B cell (primary cell): ENCODE measurements at regions of chr17 and their contacts with region 1.

Region 1: DNA sequence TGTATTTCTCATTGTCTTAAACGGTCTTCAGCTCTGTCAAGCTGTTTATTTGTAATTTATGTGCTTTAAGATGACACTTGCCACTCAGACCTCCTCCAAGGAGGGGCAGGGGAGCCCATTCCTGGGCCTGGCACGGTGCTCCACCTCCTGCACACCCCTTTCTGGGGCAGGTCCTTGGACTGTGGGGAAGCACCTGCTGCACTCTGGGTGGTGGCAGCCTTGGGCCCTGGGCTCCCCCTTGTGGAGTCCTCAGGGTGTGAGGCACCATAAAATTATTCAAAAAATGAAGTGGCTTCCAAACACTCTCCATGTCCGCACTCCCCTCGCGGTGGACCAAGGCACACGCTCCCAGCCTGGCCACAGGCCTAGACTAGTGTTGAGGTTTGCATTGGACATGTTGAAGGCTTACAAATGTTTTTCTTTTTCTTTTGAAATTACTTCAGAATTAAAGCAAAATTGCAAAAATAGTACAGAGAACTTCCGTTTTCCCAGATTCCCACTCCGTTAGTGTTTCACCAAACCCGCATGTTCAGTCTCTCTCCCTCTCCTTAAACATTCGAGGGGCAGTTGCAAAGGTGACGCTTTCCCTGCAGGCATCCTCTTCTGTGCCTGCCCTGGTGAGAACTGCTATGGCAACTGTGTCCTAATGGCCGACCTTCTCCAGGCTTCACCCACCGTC is 32.4 kb downstream of the FOXK2 start:
- DNase-seq: peak; percentile 84
- ATAC-seq: peak; percentile 100
- H3K4me3 ChIP-seq: no peak overlapping the region
- H3K4me3 Mint-ChIP-seq: no peak overlapping the region
- H3K27ac ChIP-seq: no peak overlapping the region
- H3K27ac Mint-ChIP-seq: no peak overlapping the region
- H3K4me1 ChIP-seq: peaks cover 15 to 28% of the 10 kb centered on the region in 2 donors
- H3K4me1 Mint-ChIP-seq: peaks cover 40% of the 10 kb centered on the region
- H3K27me3 ChIP-seq: no peaks in the 10 kb centered on the region
- H3K27me3 Mint-ChIP-seq: no peaks in the 10 kb centered on the region
- CTCF ChIP-seq: peak; percentile 94

Region 2: GRCh38 chr17:82037113-82037888 is 514.6 kb before region 1 on chr17 and contains the start of gene DCXR:
- CTCF ChIA-PET with region 1: no interaction called
- POLR2A ChIA-PET with region 1: no interaction called
- intact Hi-C with region 1: loop called (anchors 10 kb)
- DNase-seq: peak; percentile 98
- ATAC-seq: peak; percentile 91
- H3K4me3 ChIP-seq: peak within 1 kb of the TSS; percentile 34 to 76 (median 72)
- H3K4me3 Mint-ChIP-seq: peak within 1 kb of the TSS; percentile 90
- H3K27ac ChIP-seq: peak within 1 kb of the TSS; percentile 59 to 84
- H3K27ac Mint-ChIP-seq: peak within 1 kb of the TSS; percentile 99
- H3K4me1 ChIP-seq: peaks cover 18 to 20% of the 10 kb centered on the region in 2 donors
- H3K4me1 Mint-ChIP-seq: peaks cover 24% of the 10 kb centered on the region
- H3K27me3 ChIP-seq: peaks cover 0 to 4% (median 1%) of the 10 kb centered on the region in 4 experiments
- H3K27me3 Mint-ChIP-seq: no peaks in the 10 kb centered on the region
- CTCF ChIP-seq: peak; percentile 87
- total RNA-seq, gene DCXR: 63.9 and 70.7 TPM in 2 replicates

Region 3: GRCh38 chr17:82351716-82352488 is 200.0 kb before region 1 on chr17:
- CTCF ChIA-PET with region 1: interaction called, 43 read pairs
- POLR2A ChIA-PET with region 1: no interaction called
- intact Hi-C with region 1: loop called (anchors 1 kb)
- DNase-seq: peak; percentile 89
- ATAC-seq: peak; percentile 90
- H3K4me3 ChIP-seq: no peak overlapping the region
- H3K4me3 Mint-ChIP-seq: no peak overlapping the region
- H3K27ac ChIP-seq: no peak overlapping the region
- H3K27ac Mint-ChIP-seq: no peak overlapping the region
- H3K4me1 ChIP-seq: peaks cover 10 to 14% of the 10 kb centered on the region in 2 donors
- H3K4me1 Mint-ChIP-seq: peaks cover 5% of the 10 kb centered on the region
- H3K27me3 ChIP-seq: peaks cover 0 to 27% (median 6%) of the 10 kb centered on the region in 4 experiments
- H3K27me3 Mint-ChIP-seq: peaks cover 13% of the 10 kb centered on the region
- CTCF ChIP-seq: peak; percentile 97

Region 4: GRCh38 chr17:82450170-82451106 is 101.5 kb before region 1 on chr17 and contains the start of gene CYBC1:
- CTCF ChIA-PET with region 1: interaction called, 5 read pairs
- POLR2A ChIA-PET with region 1: interaction called, 4 read pairs
- intact Hi-C with region 1: loop called (anchors 1 kb)
- DNase-seq: peak; percentile 97
- ATAC-seq: peak; percentile 55
- H3K4me3 ChIP-seq: peak within 1 kb of the TSS; percentile 81 to 99 (median 93)
- H3K4me3 Mint-ChIP-seq: peak within 1 kb of the TSS; percentile 88
- H3K27ac ChIP-seq: peak within 1 kb of the TSS; percentile 95 to 99
- H3K27ac Mint-ChIP-seq: peak within 1 kb of the TSS; percentile 96
- H3K4me1 ChIP-seq: peaks cover 17 to 47% of the 10 kb centered on the region in 2 donors
- H3K4me1 Mint-ChIP-seq: peaks cover 40% of the 10 kb centered on the region
- H3K27me3 ChIP-seq: no peaks in the 10 kb centered on the region
- H3K27me3 Mint-ChIP-seq: no peaks in the 10 kb centered on the region
- CTCF ChIP-seq: no peak
- total RNA-seq, gene CYBC1: 569 and 578 TPM in 2 replicates

Region 5: DNA sequence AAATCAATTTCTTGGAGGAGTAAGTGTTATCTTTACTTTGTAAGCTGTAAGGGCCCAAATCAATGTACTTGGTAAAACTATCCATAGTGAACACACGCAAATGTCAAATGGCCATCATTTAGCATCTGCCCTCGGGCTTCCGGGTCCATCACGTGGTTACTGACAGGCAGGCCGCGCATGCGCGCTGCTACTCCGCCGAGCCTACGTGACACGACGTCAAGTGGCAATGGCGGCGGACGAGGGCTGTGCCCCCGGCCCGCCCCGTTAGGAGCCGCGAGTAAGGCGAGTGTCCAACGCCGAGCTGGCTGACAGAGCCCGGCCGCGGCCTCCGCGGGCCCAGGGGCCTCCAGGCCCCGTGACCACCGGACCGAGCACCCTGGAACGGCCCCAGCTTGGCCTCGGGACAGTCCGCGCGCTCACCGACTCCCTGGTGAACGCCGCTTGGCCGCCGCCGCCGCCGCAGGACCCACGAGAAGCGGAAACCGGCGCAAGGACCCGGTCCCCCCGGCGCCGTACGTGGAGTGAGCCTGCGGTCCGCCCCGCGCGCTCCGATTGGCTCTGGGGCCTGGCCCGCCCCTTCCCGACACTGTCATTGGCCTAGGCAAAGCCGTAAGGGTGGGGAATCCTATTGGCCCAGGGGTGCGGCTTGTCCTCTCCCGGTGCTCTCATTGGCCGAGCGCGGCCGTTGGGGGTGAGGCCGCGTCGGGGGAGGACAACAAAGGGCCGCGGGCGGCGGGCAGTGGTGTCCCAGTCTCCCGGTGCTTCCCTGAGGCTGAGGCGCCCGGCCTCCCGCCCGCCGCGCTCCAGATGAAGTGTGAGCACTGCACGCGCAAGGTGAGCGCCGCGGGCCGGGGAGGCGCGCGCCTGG is 93.7 kb before region 1 on chr17 and contains the start of gene NARF:
- CTCF ChIA-PET with region 1: interaction called, 4 read pairs
- POLR2A ChIA-PET with region 1: no interaction called
- intact Hi-C with region 1: loop called (anchors 1 kb)
- DNase-seq: peak; percentile 97
- ATAC-seq: peak; percentile 96
- H3K4me3 ChIP-seq: peak within 1 kb of the TSS; percentile 53 to 82 (median 74)
- H3K4me3 Mint-ChIP-seq: peak within 1 kb of the TSS; percentile 81
- H3K27ac ChIP-seq: peak within 1 kb of the TSS; percentile 91 to 99
- H3K27ac Mint-ChIP-seq: peak within 1 kb of the TSS; percentile 90
- H3K4me1 ChIP-seq: peaks cover 13 to 19% of the 10 kb centered on the region in 2 donors
- H3K4me1 Mint-ChIP-seq: peaks cover 19% of the 10 kb centered on the region
- H3K27me3 ChIP-seq: no peaks in the 10 kb centered on the region
- H3K27me3 Mint-ChIP-seq: no peaks in the 10 kb centered on the region
- CTCF ChIP-seq: no peak
- total RNA-seq, gene NARF: 103 and 104 TPM in 2 replicates

Region 6: DNA sequence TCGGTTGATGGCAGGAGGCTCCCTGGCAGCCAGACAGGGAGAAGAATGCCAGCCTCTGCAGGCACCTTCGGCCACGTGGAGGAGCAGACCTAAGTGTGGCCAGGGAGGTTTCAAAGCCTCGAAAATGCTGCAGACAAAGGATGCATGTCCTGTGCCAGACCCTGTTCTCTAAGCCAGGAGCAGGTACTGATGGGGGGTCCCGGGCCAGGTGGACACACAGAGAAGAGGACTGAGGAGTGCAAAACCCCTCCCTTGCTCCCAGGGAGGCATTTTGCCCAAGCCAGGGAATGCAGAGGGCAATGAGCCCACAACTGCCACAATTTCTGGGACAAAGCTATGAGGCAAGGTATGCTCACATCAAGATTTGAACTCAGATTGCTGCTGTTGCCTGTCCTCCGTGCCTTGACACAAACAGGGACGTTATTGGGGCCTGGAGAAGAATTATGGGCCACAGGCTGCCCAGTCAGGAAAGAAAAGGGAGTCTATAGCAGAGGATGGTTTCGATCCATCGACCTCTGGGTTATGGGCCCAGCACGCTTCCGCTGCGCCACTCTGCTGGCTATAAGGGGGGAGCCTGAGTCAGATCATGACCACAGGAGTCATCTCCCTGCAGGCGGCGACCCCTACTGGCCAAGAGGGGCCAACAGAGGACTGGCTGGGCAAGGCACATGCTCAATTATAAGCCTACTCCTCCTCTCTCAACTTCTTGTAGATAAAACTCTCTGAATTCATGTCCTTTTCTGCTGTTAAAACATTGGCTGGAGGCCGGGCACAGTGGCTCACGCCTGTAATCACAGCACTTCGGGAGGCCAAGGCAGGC is 57.5 kb before region 1 on chr17:
- CTCF ChIA-PET with region 1: interaction called, 8 read pairs
- POLR2A ChIA-PET with region 1: no interaction called
- intact Hi-C with region 1: loop called (anchors 1 kb)
- DNase-seq: peak; percentile 94
- ATAC-seq: peak; percentile 73
- H3K4me3 ChIP-seq: no peak overlapping the region
- H3K4me3 Mint-ChIP-seq: peak overlapping the region; percentile 77
- H3K27ac ChIP-seq: peak overlapping the region; percentile 7 to 25
- H3K27ac Mint-ChIP-seq: peak overlapping the region; percentile 97
- H3K4me1 ChIP-seq: peaks cover 7 to 39% of the 10 kb centered on the region in 2 donors
- H3K4me1 Mint-ChIP-seq: peaks cover 28% of the 10 kb centered on the region
- H3K27me3 ChIP-seq: no peaks in the 10 kb centered on the region
- H3K27me3 Mint-ChIP-seq: no peaks in the 10 kb centered on the region
- CTCF ChIP-seq: peak; percentile 83

Region 7: GRCh38 chr17:82518826-82519810 is 32.8 kb before region 1 on chr17 and contains the start of gene FOXK2:
- CTCF ChIA-PET with region 1: interaction called, 6 read pairs
- POLR2A ChIA-PET with region 1: no interaction called
- intact Hi-C with region 1: loop called (anchors 2 kb)
- DNase-seq: peak; percentile 96
- ATAC-seq: peak; percentile 97
- H3K4me3 ChIP-seq: peak within 1 kb of the TSS; percentile 50 to 71 (median 64)
- H3K4me3 Mint-ChIP-seq: peak within 1 kb of the TSS; percentile 88
- H3K27ac ChIP-seq: peak within 1 kb of the TSS; percentile 72 to 82
- H3K27ac Mint-ChIP-seq: peak within 1 kb of the TSS; percentile 87
- H3K4me1 ChIP-seq: peaks cover 8 to 23% of the 10 kb centered on the region in 2 donors
- H3K4me1 Mint-ChIP-seq: peaks cover 20% of the 10 kb centered on the region
- H3K27me3 ChIP-seq: no peaks in the 10 kb centered on the region
- H3K27me3 Mint-ChIP-seq: no peaks in the 10 kb centered on the region
- CTCF ChIP-seq: no peak
- total RNA-seq, gene FOXK2: 62.7 and 64.3 TPM in 2 replicates

Region 8: DNA sequence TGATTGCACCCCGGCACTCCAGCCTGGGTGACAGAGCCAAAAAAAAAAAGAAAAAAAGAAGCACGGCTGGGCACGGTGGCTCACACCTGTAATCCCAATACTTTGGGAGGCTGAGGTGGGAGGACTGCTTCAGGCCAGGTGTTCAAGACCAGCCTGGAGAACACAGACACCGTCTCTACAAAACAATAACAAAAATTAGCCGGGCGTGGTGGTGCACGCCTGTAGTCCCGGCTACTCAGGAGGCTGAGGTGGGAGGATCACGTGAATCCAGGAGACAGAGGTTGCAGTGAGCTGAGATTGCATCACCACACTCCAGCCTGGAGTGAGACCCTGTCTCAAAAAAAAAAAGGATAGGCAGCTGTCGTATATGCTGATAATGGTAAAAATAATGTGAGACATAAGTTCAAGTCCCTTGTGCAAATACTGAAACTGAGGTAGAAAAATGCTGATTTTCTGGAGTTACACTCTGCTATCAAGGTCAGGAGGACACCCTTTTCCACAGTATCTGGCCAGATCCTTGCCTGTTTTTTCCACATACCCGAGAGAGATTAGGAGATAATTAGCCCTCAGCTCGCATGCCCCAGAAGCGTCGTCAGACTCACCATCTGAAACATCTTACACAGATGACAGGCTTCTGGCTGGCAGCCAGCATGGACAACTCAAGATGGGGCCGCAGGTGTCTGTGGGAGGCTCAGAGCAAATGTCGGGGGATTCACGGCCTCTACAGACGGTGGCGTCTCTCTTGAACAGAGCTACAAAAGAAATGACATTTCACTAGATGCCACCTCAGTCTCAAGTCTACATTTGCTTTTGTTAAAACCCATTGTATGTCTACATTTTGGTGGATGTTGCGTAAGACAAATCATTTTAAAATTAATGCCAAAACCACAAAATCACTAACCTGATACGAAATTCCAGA is 59.5 kb after region 1 on chr17:
- CTCF ChIA-PET with region 1: no interaction called
- POLR2A ChIA-PET with region 1: no interaction called
- intact Hi-C with region 1: no loop called
- DNase-seq: no peak
- ATAC-seq: no peak
- H3K4me3 ChIP-seq: no peak overlapping the region
- H3K4me3 Mint-ChIP-seq: no peak overlapping the region
- H3K27ac ChIP-seq: no peak overlapping the region
- H3K27ac Mint-ChIP-seq: no peak overlapping the region
- H3K4me1 ChIP-seq: no peaks in the 10 kb centered on the region
- H3K4me1 Mint-ChIP-seq: no peaks in the 10 kb centered on the region
- H3K27me3 ChIP-seq: no peaks in the 10 kb centered on the region
- H3K27me3 Mint-ChIP-seq: no peaks in the 10 kb centered on the region
- CTCF ChIP-seq: no peak